MCF 10A (cell line): ENCODE measurements at regions of chr2 and their contacts with region 1.

Region 1: GRCh38 chr2:65264821-65265670 is 37.4 kb downstream of the ACTR2 start:
- DNase-seq: peak; percentile 75
- H3K4me3 Mint-ChIP-seq: no peak overlapping the region
- H3K27ac Mint-ChIP-seq: no peak overlapping the region
- H3K4me1 Mint-ChIP-seq: peaks cover 8% of the 10 kb centered on the region
- H3K27me3 Mint-ChIP-seq: no peaks in the 10 kb centered on the region
- CTCF ChIP-seq: peak; percentile 76

Region 2: GRCh38 chr2:65186872-65187851 is 77.9 kb before region 1 on chr2:
- CTCF ChIA-PET with region 1: no interaction called
- POLR2A ChIA-PET with region 1: no interaction called
- intact Hi-C with region 1: no loop called
- DNase-seq: peak; percentile 83
- H3K4me3 Mint-ChIP-seq: no peak overlapping the region
- H3K27ac Mint-ChIP-seq: no peak overlapping the region
- H3K4me1 Mint-ChIP-seq: peaks cover 5% of the 10 kb centered on the region
- H3K27me3 Mint-ChIP-seq: no peaks in the 10 kb centered on the region
- CTCF ChIP-seq: peak; percentile 67

Region 3: GRCh38 chr2:65252640-65253039 is 12.4 kb before region 1 on chr2:
- CTCF ChIA-PET with region 1: interaction called, 14 read pairs
- POLR2A ChIA-PET with region 1: no interaction called
- intact Hi-C with region 1: no loop called
- DNase-seq: no peak
- H3K4me3 Mint-ChIP-seq: no peak overlapping the region
- H3K27ac Mint-ChIP-seq: no peak overlapping the region
- H3K4me1 Mint-ChIP-seq: peaks cover 3% of the 10 kb centered on the region
- H3K27me3 Mint-ChIP-seq: no peaks in the 10 kb centered on the region
- CTCF ChIP-seq: no peak

Region 4: GRCh38 chr2:65320042-65320725 is 55.1 kb after region 1 on chr2:
- CTCF ChIA-PET with region 1: interaction called, 4 read pairs
- POLR2A ChIA-PET with region 1: interaction called, 4 read pairs
- intact Hi-C with region 1: loop called (anchors 2 kb)
- DNase-seq: peak; percentile 64
- H3K4me3 Mint-ChIP-seq: peak overlapping the region; percentile 32
- H3K27ac Mint-ChIP-seq: peak overlapping the region; percentile 67
- H3K4me1 Mint-ChIP-seq: peaks cover 35% of the 10 kb centered on the region
- H3K27me3 Mint-ChIP-seq: no peaks in the 10 kb centered on the region
- CTCF ChIP-seq: peak; percentile 24

Region 5: DNA sequence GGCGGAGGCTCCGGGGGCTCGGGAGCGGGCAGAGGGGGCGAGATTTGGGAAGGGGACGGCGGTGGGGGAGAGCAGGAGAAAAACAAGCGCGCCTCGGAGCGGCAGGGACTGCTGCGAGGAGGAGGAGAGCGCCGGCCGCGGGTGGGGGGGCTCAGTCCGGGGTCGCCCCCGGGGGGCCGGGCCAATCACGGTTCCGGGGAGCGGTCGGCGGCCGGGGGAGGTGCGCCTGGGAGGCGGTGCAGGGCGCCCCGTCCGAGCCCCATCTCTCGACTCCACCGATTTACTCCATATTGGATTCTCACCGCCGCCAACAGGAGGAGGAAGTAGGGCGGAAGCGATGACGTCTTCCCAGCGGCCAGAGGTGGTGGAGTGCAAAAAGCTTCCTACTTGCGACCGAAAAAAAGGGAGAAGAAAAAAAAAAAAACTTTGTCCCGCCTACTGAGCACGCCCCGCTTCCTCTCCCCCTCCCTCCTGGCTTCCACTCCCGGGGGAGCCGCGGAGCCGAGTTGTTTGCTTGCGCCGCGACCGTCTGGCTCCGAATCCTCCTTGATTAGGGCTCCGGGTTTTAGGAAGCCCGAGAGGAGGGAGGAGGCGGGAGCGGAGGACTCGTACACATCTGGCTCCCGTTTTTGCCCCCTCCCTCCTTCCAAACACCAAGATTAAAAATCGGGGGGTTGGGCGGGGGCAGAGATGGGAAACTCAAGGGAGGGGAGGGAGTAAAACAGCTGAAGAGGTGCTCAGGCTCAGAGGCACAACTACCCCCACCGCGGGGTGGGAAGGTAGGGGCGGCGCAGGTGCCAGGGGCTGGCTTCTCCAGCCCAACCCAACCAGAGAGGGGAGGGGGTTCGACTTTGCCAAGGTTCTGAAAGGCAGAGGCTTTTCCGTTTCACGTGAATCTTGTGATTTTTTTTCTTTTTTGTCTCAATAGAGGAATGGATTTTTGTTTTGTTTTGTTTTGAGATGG is 167.5 kb after region 1 on chr2 and contains the start of gene SPRED2:
- CTCF ChIA-PET with region 1: interaction called, 6 read pairs
- POLR2A ChIA-PET with region 1: interaction called, 3 read pairs
- intact Hi-C with region 1: loop called (anchors 1 kb)
- DNase-seq: peak; percentile 96
- H3K4me3 Mint-ChIP-seq: peak within 1 kb of the TSS; percentile 93
- H3K27ac Mint-ChIP-seq: peak within 1 kb of the TSS; percentile 89
- H3K4me1 Mint-ChIP-seq: peaks cover 5% of the 10 kb centered on the region
- H3K27me3 Mint-ChIP-seq: no peaks in the 10 kb centered on the region
- CTCF ChIP-seq: no peak
- total RNA-seq, gene SPRED2: 38.1 and 38.6 TPM in 2 replicates

Region 6: GRCh38 chr2:65576861-65577601 is 312.0 kb after region 1 on chr2:
- CTCF ChIA-PET with region 1: interaction called, 8 read pairs
- POLR2A ChIA-PET with region 1: interaction called, 4 read pairs
- intact Hi-C with region 1: loop called (anchors 1 kb)
- DNase-seq: peak; percentile 89
- H3K4me3 Mint-ChIP-seq: peak overlapping the region; percentile 42
- H3K27ac Mint-ChIP-seq: peak overlapping the region; percentile 95
- H3K4me1 Mint-ChIP-seq: peaks cover 19% of the 10 kb centered on the region
- H3K27me3 Mint-ChIP-seq: no peaks in the 10 kb centered on the region
- CTCF ChIP-seq: no peak